CD4-positive, alpha-beta memory T cell (primary cell): ENCODE measurements at regions of chr14 and their contacts with region 1.

Region 1: GRCh38 chr14:68816262-68816942 is 23.5 kb upstream of the ZFP36L1 start:
- DNase-seq: peak; percentile 84 to 88 (median 86)
- H3K4me3 ChIP-seq: peak overlapping the region; percentile 32 to 44
- H3K4me3 Mint-ChIP-seq: peak overlapping the region; percentile 82 to 93 (median 86)
- H3K27ac ChIP-seq: peak overlapping the region; percentile 81
- H3K27ac Mint-ChIP-seq: peak overlapping the region; percentile 95 to 98 (median 95)
- H3K4me1 ChIP-seq: peaks cover 88% of the 10 kb centered on the region
- H3K4me1 Mint-ChIP-seq: peaks cover 50 to 86% (median 67%) of the 10 kb centered on the region in 4 donors
- H3K27me3 ChIP-seq: no peaks in the 10 kb centered on the region
- H3K27me3 Mint-ChIP-seq: no peaks in the 10 kb centered on the region

Region 2: GRCh38 chr14:67837011-67837624 is 979.3 kb before region 1 on chr14:
- CTCF ChIA-PET with region 1: interaction called, 35 read pairs
- POLR2A ChIA-PET with region 1: interaction called, 4 read pairs
- intact Hi-C with region 1: loop called (anchors 1 kb)
- DNase-seq: peak; percentile 65 to 74 (median 71)
- H3K4me3 ChIP-seq: no peak overlapping the region
- H3K4me3 Mint-ChIP-seq: no peak overlapping the region
- H3K27ac ChIP-seq: no peak overlapping the region
- H3K27ac Mint-ChIP-seq: peak overlapping the region in 4 of 7 donors; percentile 23 to 64 (median 41)
- H3K4me1 ChIP-seq: no peaks in the 10 kb centered on the region
- H3K4me1 Mint-ChIP-seq: peaks cover 0 to 8% (median 0%) of the 10 kb centered on the region in 4 donors
- H3K27me3 ChIP-seq: no peaks in the 10 kb centered on the region
- H3K27me3 Mint-ChIP-seq: no peaks in the 10 kb centered on the region

Region 3: DNA sequence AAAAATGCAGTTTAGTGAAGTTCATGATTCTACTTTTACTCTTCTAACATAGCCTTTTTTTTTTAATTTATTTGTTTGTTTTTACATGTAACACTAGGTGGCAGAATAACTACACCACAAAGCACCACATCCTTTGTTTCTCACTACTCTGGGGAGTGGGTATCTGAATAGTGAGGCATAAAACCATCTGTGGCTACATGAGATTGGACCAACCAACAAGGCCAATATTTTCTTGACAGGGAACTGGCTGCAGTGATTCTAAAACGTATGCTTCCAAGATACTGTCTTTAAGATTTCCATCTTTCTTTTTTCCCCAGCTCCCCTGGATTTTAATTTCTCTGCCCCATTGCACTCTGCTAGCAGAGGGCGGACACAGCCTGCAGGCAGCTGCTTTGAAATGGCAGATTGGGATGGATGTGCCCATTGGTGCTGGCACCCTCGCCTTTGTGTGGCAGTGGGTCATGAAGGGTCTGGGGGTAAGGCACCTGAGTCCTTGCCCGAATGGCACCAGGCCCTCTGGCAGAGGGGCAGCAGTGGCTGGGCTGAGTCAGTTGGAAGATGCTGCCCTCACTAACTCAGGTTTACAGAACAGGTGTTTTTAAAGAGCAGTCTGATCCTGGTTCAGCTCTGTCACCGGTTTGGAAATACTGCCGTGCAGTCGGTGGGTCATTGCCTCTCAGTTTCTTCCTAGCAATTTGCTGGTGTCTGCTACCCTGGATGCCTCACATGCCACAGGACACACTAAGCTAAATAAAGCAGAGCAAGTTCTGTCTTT is 567.7 kb before region 1 on chr14:
- CTCF ChIA-PET with region 1: interaction called, 428 read pairs
- POLR2A ChIA-PET with region 1: interaction called, 184 read pairs
- intact Hi-C with region 1: loop called (anchors 1 kb)
- DNase-seq: peak; percentile 43 to 65 (median 62)
- H3K4me3 ChIP-seq: no peak overlapping the region
- H3K4me3 Mint-ChIP-seq: no peak overlapping the region
- H3K27ac ChIP-seq: no peak overlapping the region
- H3K27ac Mint-ChIP-seq: peak overlapping the region in 3 of 7 donors; percentile 55 to 61 (median 61)
- H3K4me1 ChIP-seq: peaks cover 24% of the 10 kb centered on the region
- H3K4me1 Mint-ChIP-seq: peaks cover 12 to 38% (median 24%) of the 10 kb centered on the region in 4 donors
- H3K27me3 ChIP-seq: no peaks in the 10 kb centered on the region
- H3K27me3 Mint-ChIP-seq: no peaks in the 10 kb centered on the region

Region 4: DNA sequence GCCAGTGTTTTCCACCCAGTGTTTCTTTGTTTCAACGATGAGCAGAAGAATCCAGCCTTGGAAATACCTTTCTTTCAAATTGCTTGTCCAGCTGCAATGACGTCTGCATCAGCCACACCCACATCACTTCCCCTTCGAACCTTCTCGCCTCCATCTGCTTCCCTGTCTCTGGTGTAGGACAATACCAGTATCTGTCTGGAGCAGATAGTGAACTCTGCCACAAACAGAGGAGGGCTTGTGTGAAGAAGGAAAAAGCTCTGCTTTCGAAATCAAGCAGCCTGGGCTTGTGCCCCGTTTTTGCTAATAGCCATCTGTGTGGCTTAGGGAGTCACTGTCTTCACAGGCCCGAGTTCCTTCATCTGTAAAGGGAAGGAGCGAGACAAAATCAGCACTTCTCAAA is 438.9 kb before region 1 on chr14:
- CTCF ChIA-PET with region 1: interaction called, 4 read pairs
- POLR2A ChIA-PET with region 1: interaction called, 15 read pairs
- intact Hi-C with region 1: no loop called
- DNase-seq: peak in 1 of 5 donors; percentile 10
- H3K4me3 ChIP-seq: no peak overlapping the region
- H3K4me3 Mint-ChIP-seq: peak overlapping the region in 7 of 8 donors; percentile 29 to 74 (median 42)
- H3K27ac ChIP-seq: peak overlapping the region; percentile 16
- H3K27ac Mint-ChIP-seq: peak overlapping the region in 6 of 7 donors; percentile 69 to 94 (median 87)
- H3K4me1 ChIP-seq: peaks cover 68% of the 10 kb centered on the region
- H3K4me1 Mint-ChIP-seq: peaks cover 32 to 70% (median 52%) of the 10 kb centered on the region in 4 donors
- H3K27me3 ChIP-seq: no peaks in the 10 kb centered on the region
- H3K27me3 Mint-ChIP-seq: no peaks in the 10 kb centered on the region

Region 5: GRCh38 chr14:68718023-68718995 is 98.1 kb before region 1 on chr14:
- CTCF ChIA-PET with region 1: interaction called, 4 read pairs
- POLR2A ChIA-PET with region 1: interaction called, 14 read pairs
- intact Hi-C with region 1: no loop called
- DNase-seq: no peak
- H3K4me3 ChIP-seq: no peak overlapping the region
- H3K4me3 Mint-ChIP-seq: no peak overlapping the region
- H3K27ac ChIP-seq: no peak overlapping the region
- H3K27ac Mint-ChIP-seq: peak overlapping the region in 2 of 7 donors; percentile 11 to 35
- H3K4me1 ChIP-seq: peaks cover 40% of the 10 kb centered on the region
- H3K4me1 Mint-ChIP-seq: peaks cover 29 to 66% (median 40%) of the 10 kb centered on the region in 4 donors
- H3K27me3 ChIP-seq: no peaks in the 10 kb centered on the region
- H3K27me3 Mint-ChIP-seq: no peaks in the 10 kb centered on the region

Region 6: DNA sequence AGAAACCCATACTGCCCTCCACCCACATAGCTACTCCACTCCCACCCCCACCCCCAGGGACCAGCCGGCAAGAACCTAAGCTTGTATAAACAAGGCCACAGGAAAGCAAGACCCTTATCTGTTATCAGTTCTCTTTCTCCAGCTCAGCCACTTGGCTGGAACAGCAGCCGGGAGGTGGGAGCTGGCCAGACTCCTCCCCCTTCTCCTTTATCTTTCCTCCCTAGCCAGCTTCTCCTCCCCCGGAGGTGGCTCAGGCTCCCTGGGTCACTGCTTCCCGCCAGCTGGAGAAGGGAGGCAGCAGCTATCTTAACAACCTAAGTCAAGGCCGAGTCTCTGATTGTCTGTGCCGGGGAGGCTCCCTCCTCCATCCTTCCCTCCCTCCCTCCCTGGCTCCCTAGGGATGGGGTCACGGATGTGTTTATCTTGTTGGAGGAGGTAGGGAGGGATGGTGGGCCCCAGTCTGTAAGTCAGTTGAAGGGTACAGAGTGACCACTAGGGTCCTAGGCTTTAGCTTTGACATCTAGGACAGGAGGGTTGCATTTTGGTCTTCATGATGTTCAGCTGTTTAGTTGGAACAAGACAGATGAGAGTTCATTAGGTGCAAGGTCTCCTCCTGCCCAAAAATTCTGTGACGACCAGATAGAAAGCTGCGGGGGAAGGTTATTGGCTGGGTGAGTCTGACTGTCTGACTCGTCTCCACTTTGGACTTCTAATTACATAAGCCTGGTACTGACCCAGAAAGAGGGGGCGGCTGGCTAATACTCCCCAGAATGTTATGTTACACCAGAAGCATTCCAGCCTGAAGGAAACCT is 53.2 kb before region 1 on chr14:
- CTCF ChIA-PET with region 1: no interaction called
- POLR2A ChIA-PET with region 1: no interaction called
- intact Hi-C with region 1: no loop called
- DNase-seq: no peak
- H3K4me3 ChIP-seq: no peak overlapping the region
- H3K4me3 Mint-ChIP-seq: no peak overlapping the region
- H3K27ac ChIP-seq: no peak overlapping the region
- H3K27ac Mint-ChIP-seq: peak overlapping the region in 1 of 7 donors; percentile 37
- H3K4me1 ChIP-seq: peaks cover 21% of the 10 kb centered on the region
- H3K4me1 Mint-ChIP-seq: peaks cover 14 to 33% (median 24%) of the 10 kb centered on the region in 4 donors
- H3K27me3 ChIP-seq: no peaks in the 10 kb centered on the region
- H3K27me3 Mint-ChIP-seq: no peaks in the 10 kb centered on the region

Region 7: GRCh38 chr14:68788996-68789820 is 27.2 kb before region 1 on chr14:
- CTCF ChIA-PET with region 1: interaction called, 238 read pairs
- POLR2A ChIA-PET with region 1: interaction called, 1,973 read pairs
- intact Hi-C with region 1: loop called (anchors 1 kb)
- DNase-seq: peak; percentile 84 to 90 (median 87)
- H3K4me3 ChIP-seq: peak overlapping the region; percentile 98 to 100
- H3K4me3 Mint-ChIP-seq: peak overlapping the region; percentile 88 to 100 (median 94)
- H3K27ac ChIP-seq: peak overlapping the region; percentile 99
- H3K27ac Mint-ChIP-seq: peak overlapping the region; percentile 96 to 100 (median 98)
- H3K4me1 ChIP-seq: peaks cover 52% of the 10 kb centered on the region
- H3K4me1 Mint-ChIP-seq: peaks cover 41 to 84% (median 53%) of the 10 kb centered on the region in 4 donors
- H3K27me3 ChIP-seq: no peaks in the 10 kb centered on the region
- H3K27me3 Mint-ChIP-seq: peaks cover 0 to 6% of the 10 kb centered on the region in 2 donors

Region 8: GRCh38 chr14:68874746-68875155 is 58.3 kb after region 1 on chr14:
- CTCF ChIA-PET with region 1: no interaction called
- POLR2A ChIA-PET with region 1: no interaction called
- intact Hi-C with region 1: no loop called
- DNase-seq: no peak
- H3K4me3 ChIP-seq: no peak overlapping the region
- H3K4me3 Mint-ChIP-seq: peak overlapping the region in 3 of 8 donors; percentile 15 to 51 (median 44)
- H3K27ac ChIP-seq: no peak overlapping the region
- H3K27ac Mint-ChIP-seq: peak overlapping the region in 1 of 7 donors; percentile 31
- H3K4me1 ChIP-seq: no peaks in the 10 kb centered on the region
- H3K4me1 Mint-ChIP-seq: no peaks in the 10 kb centered on the region
- H3K27me3 ChIP-seq: no peaks in the 10 kb centered on the region
- H3K27me3 Mint-ChIP-seq: no peaks in the 10 kb centered on the region